Esophagus muscularis mucosa (tissue), 4 donors: ENCODE measurements at regions of chrX and their contacts with region 1.

Region 1: GRCh38 chrX:4382273-4382672 is 668.8 kb upstream of the PRKX start:
- DNase-seq: no peak
- H3K4me3 ChIP-seq: no peak overlapping the region
- H3K27ac ChIP-seq: no peak overlapping the region
- H3K4me1 ChIP-seq: no peaks in the 10 kb centered on the region
- H3K27me3 ChIP-seq: no peaks in the 10 kb centered on the region
- CTCF ChIP-seq: no peak
- EP300 ChIP-seq: no peak
- POLR2A ChIP-seq: no peak

Region 2: GRCh38 chrX:3950373-3950772 is 431.9 kb before region 1 on chrX:
- intact Hi-C with region 1: no loop called
- DNase-seq: no peak
- H3K4me3 ChIP-seq: no peak overlapping the region
- H3K27ac ChIP-seq: no peak overlapping the region
- H3K4me1 ChIP-seq: no peaks in the 10 kb centered on the region
- H3K27me3 ChIP-seq: no peaks in the 10 kb centered on the region
- CTCF ChIP-seq: no peak
- EP300 ChIP-seq: no peak
- POLR2A ChIP-seq: no peak

Region 3: GRCh38 chrX:6041630-6042029 is 1659.4 kb after region 1 on chrX:
- intact Hi-C with region 1: loop called (anchors 10 kb)
- DNase-seq: no peak
- H3K4me3 ChIP-seq: no peak overlapping the region
- H3K27ac ChIP-seq: no peak overlapping the region
- H3K4me1 ChIP-seq: no peaks in the 10 kb centered on the region
- H3K27me3 ChIP-seq: no peaks in the 10 kb centered on the region
- CTCF ChIP-seq: no peak
- EP300 ChIP-seq: no peak
- POLR2A ChIP-seq: no peak